Lower leg skin (tissue), 4 donors: ENCODE measurements at regions of chr3 and their contacts with region 1.

Region 1: DNA sequence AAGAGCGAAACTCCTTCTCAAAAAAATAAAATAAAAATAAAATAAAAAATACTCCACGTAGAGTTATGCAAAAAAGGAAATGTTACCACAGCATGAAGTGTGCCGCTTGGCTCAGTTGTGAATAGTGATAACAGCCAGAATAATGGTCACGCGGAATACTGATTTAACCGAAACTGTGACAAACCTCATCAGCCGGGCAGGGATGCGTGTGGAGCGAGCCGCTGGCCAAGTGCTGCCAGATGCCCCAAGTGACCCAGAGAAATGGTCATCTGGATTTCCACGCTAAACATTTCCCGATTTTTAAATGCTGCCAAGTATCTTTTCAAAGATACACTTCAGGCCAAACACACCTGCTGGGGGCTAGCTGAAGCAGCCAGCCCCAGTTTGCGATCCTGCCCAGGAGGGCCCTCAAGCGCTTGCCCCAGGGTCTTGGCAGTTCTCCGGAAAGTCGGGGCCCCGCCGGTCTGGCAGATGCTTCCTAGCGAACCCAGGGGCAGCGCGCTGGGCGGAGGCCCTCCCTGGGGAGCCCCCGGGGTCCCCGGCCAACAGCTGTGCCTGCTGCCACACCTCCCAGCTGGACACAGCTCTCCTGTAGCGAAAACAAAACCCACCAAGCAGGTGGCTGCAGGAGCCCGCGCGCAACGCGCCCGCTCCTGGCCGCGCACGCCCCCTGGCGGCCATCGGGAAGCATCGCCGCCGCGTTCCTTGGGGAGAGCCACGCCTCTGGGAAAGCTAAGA is 35.1 kb downstream of the CMTM6 start:
- DNase-seq: peak; percentile 49 to 92
- H3K4me3 ChIP-seq: no peak overlapping the region
- CTCF ChIP-seq: peak in 2 of 3 donors; percentile 21 to 88
- POLR2A ChIP-seq: no peak

Region 2: DNA sequence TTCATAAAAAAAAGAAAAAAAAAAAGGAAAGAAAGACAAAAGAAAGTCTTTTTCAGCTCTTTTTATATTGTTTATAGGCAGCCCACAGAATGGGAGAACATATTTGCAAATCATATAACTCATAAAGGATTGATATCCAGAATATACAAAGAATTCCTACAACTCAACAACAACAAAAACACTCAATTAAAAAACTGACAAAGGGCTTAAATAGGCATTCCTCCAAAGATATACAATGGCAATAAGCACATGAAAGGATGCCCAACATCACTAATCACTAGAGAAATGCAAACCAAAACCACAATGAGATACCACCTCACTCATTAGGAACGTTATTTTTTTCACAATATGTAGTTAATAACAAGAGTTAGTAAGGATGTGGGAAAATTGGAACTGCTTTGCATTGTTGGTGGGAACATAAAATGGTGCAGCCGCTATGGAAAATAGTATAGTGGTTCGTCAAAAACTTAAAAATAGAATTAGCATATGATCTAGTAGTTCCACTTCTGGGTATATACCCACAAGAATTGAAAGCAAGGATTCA is 283.2 kb before region 1 on chr3:
- intact Hi-C with region 1: loop called (anchors 10 kb)
- DNase-seq: no peak
- H3K4me3 ChIP-seq: no peak overlapping the region
- CTCF ChIP-seq: no peak
- POLR2A ChIP-seq: no peak

Region 3: DNA sequence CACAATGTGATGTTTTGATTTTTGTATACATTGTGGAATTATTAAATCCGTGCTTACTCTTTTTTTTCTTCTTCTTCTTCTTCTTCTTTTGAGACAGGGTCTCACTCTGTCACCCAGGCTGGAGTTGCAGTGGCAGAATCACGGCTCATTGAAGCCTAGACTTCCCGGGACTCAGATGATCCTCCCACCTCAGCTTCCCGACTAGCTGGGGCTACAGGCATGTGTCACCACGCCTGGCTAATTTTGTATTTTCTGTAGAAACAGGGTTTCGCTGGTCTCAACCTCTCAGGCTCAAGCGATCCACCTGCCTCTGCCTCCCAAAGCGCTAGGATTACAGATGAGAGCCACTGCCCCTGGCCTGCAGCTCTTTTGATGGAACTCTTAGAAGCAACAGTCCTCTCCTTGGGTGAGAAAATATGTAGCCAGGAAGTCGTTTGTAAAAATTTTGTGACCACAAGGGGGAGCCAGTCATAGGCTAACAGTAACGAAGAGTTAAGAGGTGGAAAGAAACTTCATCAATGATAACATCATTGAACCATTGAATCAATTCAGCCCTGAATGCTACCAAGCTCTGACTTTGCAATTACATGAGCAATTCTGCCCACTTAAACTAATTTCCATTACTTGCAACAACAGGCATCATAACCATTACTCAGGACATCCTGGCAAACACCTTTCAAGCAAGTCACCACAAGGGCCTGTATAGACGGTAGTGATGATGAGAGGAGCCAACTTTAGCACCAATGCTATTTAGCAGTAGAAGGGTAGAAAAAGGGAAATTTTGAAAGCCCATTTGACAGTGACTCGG is 92.5 kb before region 1 on chr3:
- intact Hi-C with region 1: loop called (anchors 2 kb)
- DNase-seq: peak in 1 of 2 donors; percentile 77
- H3K4me3 ChIP-seq: no peak overlapping the region
- CTCF ChIP-seq: no peak
- POLR2A ChIP-seq: no peak

Region 4: DNA sequence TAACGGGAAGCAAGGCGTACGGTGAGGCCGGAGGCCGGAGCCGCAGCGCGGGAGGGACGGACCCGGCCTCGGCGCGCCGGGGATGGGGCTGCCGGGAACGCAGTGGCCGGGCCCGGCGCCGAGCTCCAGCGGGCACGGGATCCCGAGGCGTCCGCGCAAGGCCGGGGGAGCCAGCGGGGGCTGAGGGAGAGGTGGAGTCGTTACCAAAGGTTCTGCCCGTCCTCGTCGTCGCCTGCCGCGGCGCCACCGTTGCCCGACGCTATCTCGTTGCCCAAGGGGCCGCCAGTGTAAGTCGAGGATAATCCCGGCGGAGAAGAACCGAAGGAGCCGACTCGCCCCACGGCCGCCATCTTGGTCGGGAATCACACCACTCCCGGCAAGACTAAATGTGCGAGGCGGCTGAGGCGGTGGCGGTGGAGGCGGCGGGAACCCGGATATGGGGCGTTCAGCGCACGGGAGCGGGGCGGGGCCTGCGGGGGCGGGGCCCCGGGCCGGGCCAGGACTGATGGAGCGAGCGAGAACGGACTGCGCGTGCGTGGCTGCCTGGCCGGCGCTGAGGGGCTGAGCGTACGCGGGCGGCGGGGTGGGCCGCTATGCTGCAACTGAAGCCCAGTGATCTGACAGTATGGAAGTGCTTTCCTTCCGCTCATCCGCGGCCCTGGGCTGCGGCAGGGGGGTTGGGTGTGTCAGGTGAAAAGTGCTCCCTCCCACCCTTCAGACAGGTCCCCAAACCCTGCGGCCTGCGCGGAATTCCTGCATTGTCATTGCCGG is 103.1 kb after region 1 on chr3 and contains the start of gene DYNC1LI1:
- intact Hi-C with region 1: no loop called
- DNase-seq: peak; percentile 94 to 99
- H3K4me3 ChIP-seq: peak within 1 kb of the TSS; percentile 85
- CTCF ChIP-seq: no peak
- POLR2A ChIP-seq: peak in 1 of 2 donors; percentile 30
- total RNA-seq, gene DYNC1LI1: 60.4 to 64.3 (median 62.8) TPM